Calu3 (cell line): ENCODE measurements at regions of chr19 and their contacts with region 1.

Region 1: DNA sequence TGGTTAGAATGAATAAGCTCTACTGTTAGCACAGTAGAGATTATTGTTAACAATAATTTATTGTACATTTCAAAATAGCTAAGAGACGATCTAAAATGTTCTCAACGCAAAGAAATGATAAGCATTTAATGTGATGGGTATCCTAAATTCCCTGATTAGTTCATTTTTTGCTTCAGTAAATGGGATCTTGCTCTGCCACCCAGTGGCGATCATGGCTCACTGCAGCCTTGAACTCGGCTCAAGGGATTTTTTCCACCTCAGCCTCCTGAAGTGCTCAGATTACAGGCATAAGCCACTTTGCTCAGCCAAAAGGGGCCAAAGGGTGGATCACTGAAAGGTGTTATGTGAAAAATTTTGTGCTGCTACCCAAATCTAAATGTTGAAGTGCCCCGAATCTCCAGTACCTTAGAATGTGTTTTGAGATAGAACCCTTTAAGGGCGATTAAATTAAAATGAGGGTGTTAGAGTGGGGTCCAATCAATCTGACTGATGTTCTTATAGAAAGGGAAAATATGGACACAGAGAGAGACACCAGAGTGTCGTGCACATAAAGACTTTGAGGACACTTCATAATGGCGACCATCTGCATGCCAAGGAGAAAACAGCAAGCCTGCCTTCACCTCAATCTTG is 31.5 kb upstream of the ZNF766 start:
- DNase-seq: peak; percentile 63
- H3K4me3 Mint-ChIP-seq: no peak overlapping the region
- H3K27ac Mint-ChIP-seq: no peak overlapping the region
- H3K4me1 Mint-ChIP-seq: no peaks in the 10 kb centered on the region
- H3K27me3 Mint-ChIP-seq: no peaks in the 10 kb centered on the region
- CTCF ChIP-seq: peak; percentile 70

Region 2: DNA sequence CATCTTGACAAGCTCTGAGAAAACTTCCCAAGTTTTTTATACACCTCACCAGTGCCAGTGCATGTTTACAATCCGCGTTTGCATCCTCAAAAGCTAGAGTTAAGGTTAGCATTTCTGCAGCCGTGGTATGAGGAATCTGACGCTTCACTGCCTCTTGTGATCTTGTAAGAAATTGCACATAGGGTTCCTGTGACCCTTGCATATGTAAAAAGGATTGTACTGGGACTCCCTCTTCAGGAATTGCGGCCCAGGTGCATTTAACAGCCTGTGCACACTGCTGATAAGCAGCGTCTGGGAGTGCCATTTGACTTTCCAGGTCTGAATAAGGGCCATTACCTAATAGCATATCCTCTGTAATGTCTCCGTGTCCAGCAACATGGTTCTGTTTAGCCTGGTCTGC is 427.7 kb before region 1 on chr19:
- CTCF ChIA-PET with region 1: no interaction called
- intact Hi-C with region 1: loop called (anchors 5 kb)
- DNase-seq: peak; percentile 7
- H3K4me3 Mint-ChIP-seq: no peak overlapping the region
- H3K27ac Mint-ChIP-seq: no peak overlapping the region
- H3K4me1 Mint-ChIP-seq: no peaks in the 10 kb centered on the region
- H3K27me3 Mint-ChIP-seq: no peaks in the 10 kb centered on the region
- CTCF ChIP-seq: no peak

Region 3: GRCh38 chr19:52007806-52008557 is 229.9 kb before region 1 on chr19 and contains the start of gene ZNF615:
- CTCF ChIA-PET with region 1: no interaction called
- intact Hi-C with region 1: loop called (anchors 10 kb)
- DNase-seq: peak; percentile 90
- H3K4me3 Mint-ChIP-seq: peak within 1 kb of the TSS; percentile 94
- H3K27ac Mint-ChIP-seq: peak within 1 kb of the TSS; percentile 73
- H3K4me1 Mint-ChIP-seq: peaks cover 9% of the 10 kb centered on the region
- H3K27me3 Mint-ChIP-seq: no peaks in the 10 kb centered on the region
- CTCF ChIP-seq: no peak
- total RNA-seq, gene ZNF615: 5.3 and 7.3 TPM in 2 replicates

Region 4: DNA sequence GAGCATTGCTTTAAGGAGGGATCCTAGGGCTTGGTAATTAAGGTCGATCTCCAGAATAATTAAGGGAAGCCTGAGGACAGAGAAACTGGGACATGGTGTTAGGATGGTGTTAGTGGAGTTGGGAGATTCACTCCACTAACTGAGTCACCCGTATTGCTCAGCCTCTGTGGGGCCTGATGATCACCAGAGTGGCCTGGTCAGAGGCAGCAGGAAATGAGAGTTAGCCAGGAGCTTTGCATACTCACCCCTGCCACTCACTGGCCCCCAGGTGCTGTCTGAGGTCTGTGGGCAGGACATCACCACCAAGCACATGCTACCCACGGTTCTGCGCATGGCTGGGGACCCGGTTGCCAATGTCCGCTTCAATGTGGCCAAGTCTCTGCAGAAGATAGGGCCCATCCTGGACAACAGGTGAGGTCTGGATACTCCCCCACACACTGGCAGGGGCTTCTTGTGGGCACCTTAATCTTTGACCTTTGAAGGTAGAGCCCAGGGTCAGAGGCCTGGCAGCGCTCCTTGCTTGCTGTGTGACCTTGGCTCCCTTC is 16.0 kb before region 1 on chr19:
- CTCF ChIA-PET with region 1: no interaction called
- intact Hi-C with region 1: no loop called
- DNase-seq: no peak
- H3K4me3 Mint-ChIP-seq: no peak overlapping the region
- H3K27ac Mint-ChIP-seq: no peak overlapping the region
- H3K4me1 Mint-ChIP-seq: no peaks in the 10 kb centered on the region
- H3K27me3 Mint-ChIP-seq: no peaks in the 10 kb centered on the region
- CTCF ChIP-seq: no peak

Region 5: GRCh38 chr19:52336117-52336790 is 98.4 kb after region 1 on chr19 and contains the start of gene ZNF610:
- CTCF ChIA-PET with region 1: no interaction called
- intact Hi-C with region 1: no loop called
- DNase-seq: no peak
- H3K4me3 Mint-ChIP-seq: no peak within 1 kb of the TSS
- H3K27ac Mint-ChIP-seq: no peak within 1 kb of the TSS
- H3K4me1 Mint-ChIP-seq: no peaks in the 10 kb centered on the region
- H3K27me3 Mint-ChIP-seq: no peaks in the 10 kb centered on the region
- CTCF ChIP-seq: no peak
- total RNA-seq, gene ZNF610: not detected in 2 replicates